PC-9 (cell line): ENCODE measurements at regions of chr14 and their contacts with region 1.

Region 1: GRCh38 chr14:53090853-53091252 is 62.3 kb downstream of the DDHD1 start:
- DNase-seq: no peak
- H3K4me3 ChIP-seq: no peak overlapping the region
- H3K27ac ChIP-seq: no peak overlapping the region
- H3K4me1 ChIP-seq: no peaks in the 10 kb centered on the region
- H3K27me3 ChIP-seq: no peaks in the 10 kb centered on the region
- CTCF ChIP-seq: no peak

Region 2: DNA sequence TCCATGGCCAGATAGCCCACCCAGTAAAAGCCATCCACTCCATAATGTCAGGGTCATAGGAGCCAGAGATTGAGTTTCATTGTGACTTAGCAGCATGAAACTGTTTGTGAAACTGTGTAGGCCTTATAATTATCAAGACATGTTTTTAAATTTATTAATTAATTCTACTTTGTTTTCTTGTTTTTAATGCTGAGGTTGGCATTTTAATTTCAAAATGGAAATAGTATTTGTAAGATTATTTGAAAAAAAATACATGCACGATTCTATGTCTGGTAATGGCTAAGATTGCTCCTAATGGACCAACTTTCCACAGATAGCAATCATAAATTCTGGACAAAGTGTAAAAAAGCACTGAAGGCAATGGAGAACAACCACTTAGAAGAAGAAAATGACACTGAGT is 471.2 kb before region 1 on chr14:
- CTCF ChIA-PET with region 1: interaction called, 12 read pairs
- POLR2A ChIA-PET with region 1: no interaction called
- intact Hi-C with region 1: no loop called
- DNase-seq: no peak
- H3K4me3 ChIP-seq: no peak overlapping the region
- H3K27ac ChIP-seq: no peak overlapping the region
- H3K4me1 ChIP-seq: no peaks in the 10 kb centered on the region
- H3K27me3 ChIP-seq: no peaks in the 10 kb centered on the region
- CTCF ChIP-seq: no peak

Region 3: GRCh38 chr14:53113989-53114388 is 23.1 kb after region 1 on chr14:
- CTCF ChIA-PET with region 1: no interaction called
- POLR2A ChIA-PET with region 1: no interaction called
- intact Hi-C with region 1: no loop called
- DNase-seq: no peak
- H3K4me3 ChIP-seq: no peak overlapping the region
- H3K27ac ChIP-seq: no peak overlapping the region
- H3K4me1 ChIP-seq: no peaks in the 10 kb centered on the region
- H3K27me3 ChIP-seq: no peaks in the 10 kb centered on the region
- CTCF ChIP-seq: no peak

Region 4: GRCh38 chr14:53152890-53153701 is 62.2 kb after region 1 on chr14 and contains the start of gene DDHD1:
- CTCF ChIA-PET with region 1: interaction called, 10 read pairs
- POLR2A ChIA-PET with region 1: no interaction called
- intact Hi-C with region 1: no loop called
- DNase-seq: peak in 1 of 2 experiments; percentile 77
- H3K4me3 ChIP-seq: peak within 1 kb of the TSS; percentile 96
- H3K27ac ChIP-seq: no peak within 1 kb of the TSS
- H3K4me1 ChIP-seq: peaks cover 14% of the 10 kb centered on the region
- H3K27me3 ChIP-seq: no peaks in the 10 kb centered on the region
- CTCF ChIP-seq: no peak
- total RNA-seq, gene DDHD1: 11.1 and 11.3 TPM in 2 replicates